CD8-positive, alpha-beta T cell (primary cell): ENCODE measurements at regions of chr17 and their contacts with region 1.

Region 1: GRCh38 chr17:28916302-28916934 is 13.5 kb upstream of the DHRS13 start:
- DNase-seq: peak in 6 of 9 experiments; percentile 44 to 67 (median 54)
- ATAC-seq: peak; percentile 75
- H3K4me3 ChIP-seq: no peak overlapping the region
- H3K4me3 Mint-ChIP-seq: no peak overlapping the region
- H3K27ac ChIP-seq: no peak overlapping the region
- H3K27ac Mint-ChIP-seq: peak overlapping the region; percentile 65
- H3K4me1 ChIP-seq: no peaks in the 10 kb centered on the region
- H3K4me1 Mint-ChIP-seq: peaks cover 1% of the 10 kb centered on the region
- H3K27me3 ChIP-seq: no peaks in the 10 kb centered on the region
- H3K27me3 Mint-ChIP-seq: no peaks in the 10 kb centered on the region
- CTCF ChIP-seq: peak; percentile 74

Region 2: GRCh38 chr17:28750178-28751047 is 166.0 kb before region 1 on chr17:
- CTCF ChIA-PET with region 1: interaction called, 11 read pairs
- POLR2A ChIA-PET with region 1: no interaction called
- intact Hi-C with region 1: no loop called
- DNase-seq: peak; percentile 69 to 93 (median 89)
- ATAC-seq: peak; percentile 93
- H3K4me3 ChIP-seq: no peak overlapping the region
- H3K4me3 Mint-ChIP-seq: no peak overlapping the region
- H3K27ac ChIP-seq: no peak overlapping the region
- H3K27ac Mint-ChIP-seq: no peak overlapping the region
- H3K4me1 ChIP-seq: peaks cover 15% of the 10 kb centered on the region
- H3K4me1 Mint-ChIP-seq: peaks cover 16% of the 10 kb centered on the region
- H3K27me3 ChIP-seq: no peaks in the 10 kb centered on the region
- H3K27me3 Mint-ChIP-seq: no peaks in the 10 kb centered on the region
- CTCF ChIP-seq: peak; percentile 99

Region 3: GRCh38 chr17:28849281-28849680 is 67.1 kb before region 1 on chr17:
- CTCF ChIA-PET with region 1: interaction called, 17 read pairs
- POLR2A ChIA-PET with region 1: no interaction called
- intact Hi-C with region 1: loop called in 1 of 2 experiments (anchors 1 kb)
- DNase-seq: peak in 3 of 9 experiments; percentile 13 to 32 (median 29)
- ATAC-seq: no peak
- H3K4me3 ChIP-seq: no peak overlapping the region
- H3K4me3 Mint-ChIP-seq: no peak overlapping the region
- H3K27ac ChIP-seq: no peak overlapping the region
- H3K27ac Mint-ChIP-seq: no peak overlapping the region
- H3K4me1 ChIP-seq: peaks cover 3% of the 10 kb centered on the region
- H3K4me1 Mint-ChIP-seq: peaks cover 6% of the 10 kb centered on the region
- H3K27me3 ChIP-seq: no peaks in the 10 kb centered on the region
- H3K27me3 Mint-ChIP-seq: no peaks in the 10 kb centered on the region
- CTCF ChIP-seq: no peak

Region 4: DNA sequence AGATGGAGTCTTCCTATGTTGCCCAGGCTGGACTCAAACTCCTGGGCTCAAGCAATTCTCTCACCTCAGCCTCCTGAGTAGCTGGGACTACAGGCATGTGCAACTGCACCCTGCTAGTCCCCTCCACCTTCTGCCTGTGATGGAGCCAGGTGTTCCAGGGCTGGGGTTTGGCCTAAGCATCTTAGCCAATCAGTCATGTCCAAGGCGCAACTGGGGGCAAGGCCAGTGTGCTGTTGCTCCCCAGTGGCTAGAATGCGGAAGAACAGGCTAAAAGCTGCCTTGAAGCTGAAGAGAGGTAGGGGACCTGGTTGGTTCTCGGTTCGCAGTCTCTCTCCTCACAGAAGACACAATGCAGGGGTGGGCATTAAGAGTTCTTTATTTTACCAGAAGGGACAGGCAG is 37.4 kb before region 1 on chr17:
- CTCF ChIA-PET with region 1: no interaction called
- POLR2A ChIA-PET with region 1: no interaction called
- intact Hi-C with region 1: no loop called
- DNase-seq: peak in 1 of 9 experiments; percentile 26
- ATAC-seq: no peak
- H3K4me3 ChIP-seq: no peak overlapping the region
- H3K4me3 Mint-ChIP-seq: no peak overlapping the region
- H3K27ac ChIP-seq: no peak overlapping the region
- H3K27ac Mint-ChIP-seq: no peak overlapping the region
- H3K4me1 ChIP-seq: no peaks in the 10 kb centered on the region
- H3K4me1 Mint-ChIP-seq: no peaks in the 10 kb centered on the region
- H3K27me3 ChIP-seq: no peaks in the 10 kb centered on the region
- H3K27me3 Mint-ChIP-seq: no peaks in the 10 kb centered on the region
- CTCF ChIP-seq: no peak

Region 5: GRCh38 chr17:29089601-29090044 is 173.2 kb after region 1 on chr17:
- CTCF ChIA-PET with region 1: no interaction called
- POLR2A ChIA-PET with region 1: no interaction called
- intact Hi-C with region 1: no loop called
- DNase-seq: no peak
- ATAC-seq: no peak
- H3K4me3 ChIP-seq: no peak overlapping the region
- H3K4me3 Mint-ChIP-seq: no peak overlapping the region
- H3K27ac ChIP-seq: no peak overlapping the region
- H3K27ac Mint-ChIP-seq: no peak overlapping the region
- H3K4me1 ChIP-seq: no peaks in the 10 kb centered on the region
- H3K4me1 Mint-ChIP-seq: no peaks in the 10 kb centered on the region
- H3K27me3 ChIP-seq: no peaks in the 10 kb centered on the region
- H3K27me3 Mint-ChIP-seq: no peaks in the 10 kb centered on the region
- CTCF ChIP-seq: no peak